CD8-positive, alpha-beta T cell (primary cell): ENCODE measurements at regions of chr3 and their contacts with region 1.

Region 1: GRCh38 chr3:109177908-109178307 is 41.4 kb downstream of the C3orf85 start:
- DNase-seq: no peak
- ATAC-seq: no peak
- H3K4me3 ChIP-seq: no peak overlapping the region
- H3K4me3 Mint-ChIP-seq: no peak overlapping the region
- H3K27ac ChIP-seq: no peak overlapping the region
- H3K27ac Mint-ChIP-seq: no peak overlapping the region
- H3K4me1 ChIP-seq: no peaks in the 10 kb centered on the region
- H3K4me1 Mint-ChIP-seq: no peaks in the 10 kb centered on the region
- H3K27me3 ChIP-seq: no peaks in the 10 kb centered on the region
- H3K27me3 Mint-ChIP-seq: peaks cover 3% of the 10 kb centered on the region
- CTCF ChIP-seq: no peak

Region 2: DNA sequence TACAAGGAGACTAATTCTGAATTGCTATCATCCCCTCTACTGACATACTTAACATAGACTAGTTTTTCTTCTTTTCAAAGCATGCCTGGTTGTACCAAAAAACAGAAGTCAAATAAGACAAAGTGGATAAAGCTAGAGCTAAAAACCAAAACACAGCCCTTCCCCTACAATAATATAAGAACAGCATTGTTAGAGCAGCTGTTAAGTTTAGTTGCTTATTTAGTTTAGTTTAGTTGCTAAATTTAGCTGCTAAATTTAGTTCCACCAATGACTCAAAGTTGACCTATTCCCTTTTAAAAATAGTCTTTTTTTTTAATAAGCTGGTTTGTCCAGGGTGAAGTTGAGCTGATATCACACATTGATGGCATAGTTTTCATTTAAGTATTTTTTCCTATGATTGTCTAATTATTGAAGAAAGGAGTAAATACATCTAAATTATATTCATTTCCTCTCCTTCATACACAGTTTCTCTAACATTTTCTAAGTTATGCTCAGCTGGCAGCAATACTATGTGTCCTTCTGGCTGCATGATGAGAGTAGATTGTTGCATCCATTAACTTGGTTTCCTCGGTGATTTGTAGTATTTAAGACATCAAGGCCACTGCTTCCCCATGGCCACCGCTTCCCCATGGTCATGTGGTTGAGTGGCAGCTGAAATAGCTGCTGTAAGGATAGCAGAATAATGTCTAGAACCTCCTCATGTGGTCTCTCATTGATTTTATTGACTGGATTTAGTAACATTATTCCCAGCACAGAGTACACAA is 1175.1 kb after region 1 on chr3:
- CTCF ChIA-PET with region 1: no interaction called
- POLR2A ChIA-PET with region 1: no interaction called
- intact Hi-C with region 1: loop called in 1 of 2 experiments (anchors 5 kb)
- DNase-seq: no peak
- ATAC-seq: no peak
- H3K4me3 ChIP-seq: no peak overlapping the region
- H3K4me3 Mint-ChIP-seq: no peak overlapping the region
- H3K27ac ChIP-seq: no peak overlapping the region
- H3K27ac Mint-ChIP-seq: no peak overlapping the region
- H3K4me1 ChIP-seq: no peaks in the 10 kb centered on the region
- H3K4me1 Mint-ChIP-seq: no peaks in the 10 kb centered on the region
- H3K27me3 ChIP-seq: no peaks in the 10 kb centered on the region
- H3K27me3 Mint-ChIP-seq: peaks cover 2% of the 10 kb centered on the region
- CTCF ChIP-seq: no peak